ENCODE measurements at regions of chr18 and their contacts with region 1.

Region 1: DNA sequence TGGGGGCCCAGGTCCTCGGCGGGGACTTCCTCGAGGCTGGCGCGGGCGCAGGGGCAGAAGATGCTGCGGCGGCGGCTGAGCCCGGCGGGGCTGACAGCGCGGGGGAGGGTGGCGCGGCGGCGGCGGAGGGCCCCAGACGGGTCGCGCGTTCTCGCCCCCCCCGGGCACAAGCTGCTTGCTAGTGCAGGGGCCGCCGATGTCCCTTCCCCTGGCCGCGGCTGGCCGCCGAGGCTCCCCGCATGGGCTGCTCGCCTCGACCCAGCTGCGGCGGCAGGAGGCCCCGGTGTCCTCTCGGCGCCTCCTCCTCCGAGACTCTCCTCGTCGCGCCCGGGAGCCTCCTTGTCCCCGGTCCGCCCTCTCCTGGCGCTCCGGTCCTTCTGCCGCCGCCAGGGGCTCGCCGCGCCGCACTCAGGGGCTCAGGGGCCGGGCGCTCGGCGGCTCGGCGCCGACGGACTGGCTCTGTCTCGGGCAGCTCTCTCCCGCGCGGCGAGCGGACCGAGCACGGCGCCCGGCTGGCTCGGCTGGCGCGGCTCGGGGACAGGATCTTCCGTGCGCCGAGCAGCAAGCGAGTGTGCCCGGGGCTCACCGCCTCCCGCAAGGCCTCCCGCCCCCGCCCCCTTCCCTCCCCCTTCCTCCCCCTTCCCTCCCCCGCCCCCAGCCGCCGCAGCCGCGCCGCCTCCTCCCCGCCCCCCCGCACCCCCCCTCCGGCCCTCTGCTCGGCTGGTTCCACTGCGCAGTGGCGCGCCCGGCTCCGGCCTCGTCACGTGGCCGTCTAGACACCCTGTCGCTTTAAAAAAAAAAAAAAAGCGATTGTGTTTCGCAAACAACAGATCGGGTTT is 902 bp upstream of the SMAD7 start:
- DNase-seq: peak; percentile 77
- ATAC-seq: peak; percentile 46
- H3K4me3 Mint-ChIP-seq: peak overlapping the region; percentile 95
- H3K27ac Mint-ChIP-seq: peak overlapping the region; percentile 98
- H3K4me1 Mint-ChIP-seq: peaks cover 32% of the 10 kb centered on the region
- H3K27me3 Mint-ChIP-seq: no peaks in the 10 kb centered on the region
- CTCF ChIP-seq: no peak

Region 2: DNA sequence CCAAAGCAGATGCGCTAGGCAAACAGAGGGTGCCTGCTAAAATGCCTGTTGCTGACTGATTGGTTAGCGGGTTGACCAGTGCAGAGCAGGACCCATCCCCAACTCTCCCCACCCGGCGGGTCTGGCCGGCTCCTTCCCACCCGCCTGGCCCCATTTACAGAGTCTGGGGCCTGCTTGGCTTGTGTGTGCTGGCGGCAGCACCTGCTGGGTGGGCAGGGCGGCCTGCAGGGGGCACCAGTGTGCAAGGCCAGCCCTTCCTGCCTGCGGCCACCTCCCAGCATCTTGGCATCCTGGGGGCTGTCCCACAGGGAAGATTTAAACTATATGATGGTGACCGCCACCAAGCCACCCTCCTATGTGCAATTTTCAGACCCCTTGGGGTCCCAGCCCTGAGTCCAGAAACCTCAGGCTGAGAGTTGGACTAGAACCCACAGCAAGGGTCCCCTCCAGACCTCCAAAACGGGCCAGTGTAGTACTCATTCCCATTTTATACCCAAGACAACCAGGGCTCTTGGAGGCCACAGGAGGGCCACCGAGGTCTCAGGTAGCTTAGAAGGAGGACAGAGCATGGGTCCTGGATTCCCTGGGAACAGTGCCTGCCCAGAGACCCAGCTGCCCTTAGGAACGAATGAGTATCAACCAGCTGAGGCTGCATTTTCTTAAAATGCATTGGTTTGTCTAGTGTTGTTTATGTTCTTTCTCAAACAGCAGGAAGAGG is 174.5 kb before region 1 on chr18:
- CTCF ChIA-PET with region 1: interaction called, 6 read pairs
- POLR2A ChIA-PET with region 1: interaction called, 6 read pairs
- intact Hi-C with region 1: loop called (anchors 2 kb)
- DNase-seq: peak; percentile 63
- ATAC-seq: peak; percentile 85
- H3K4me3 Mint-ChIP-seq: no peak overlapping the region
- H3K27ac Mint-ChIP-seq: no peak overlapping the region
- H3K4me1 Mint-ChIP-seq: peaks cover 18% of the 10 kb centered on the region
- H3K27me3 Mint-ChIP-seq: no peaks in the 10 kb centered on the region
- CTCF ChIP-seq: peak; percentile 66

Region 3: DNA sequence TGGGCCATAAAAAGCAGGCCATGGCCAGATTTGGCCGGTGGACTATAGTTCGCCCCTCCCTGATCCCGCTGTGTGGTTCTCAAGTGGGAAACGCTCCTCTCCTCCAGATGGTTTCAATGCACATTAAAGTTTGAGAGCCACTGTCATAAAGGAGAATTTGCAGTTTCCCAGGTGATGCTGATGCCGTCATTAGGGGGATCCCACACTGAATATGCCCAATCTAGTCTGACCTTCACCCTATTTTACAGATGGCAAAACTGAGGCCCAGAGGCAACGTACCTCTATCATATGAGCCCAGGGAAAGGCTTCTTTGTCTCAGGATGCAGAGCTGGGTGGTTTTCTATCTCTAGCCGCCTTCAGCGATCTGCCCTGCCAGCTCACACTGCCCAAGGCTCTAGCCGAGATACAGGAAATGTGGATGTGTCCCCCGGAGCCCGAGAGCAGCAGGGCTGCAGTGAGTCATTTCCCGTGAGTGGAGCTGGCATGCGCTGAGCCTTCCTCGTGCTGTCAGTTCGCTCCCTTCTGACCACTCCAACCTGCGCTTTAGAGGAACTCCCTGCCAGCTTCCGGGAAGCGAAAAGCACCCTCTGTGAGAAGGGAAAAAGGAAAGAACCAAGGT is 117.1 kb before region 1 on chr18:
- CTCF ChIA-PET with region 1: no interaction called
- POLR2A ChIA-PET with region 1: interaction called, 5 read pairs
- intact Hi-C with region 1: loop called (anchors 1 kb)
- DNase-seq: peak; percentile 42
- ATAC-seq: peak; percentile 83
- H3K4me3 Mint-ChIP-seq: peak overlapping the region; percentile 76
- H3K27ac Mint-ChIP-seq: peak overlapping the region; percentile 80
- H3K4me1 Mint-ChIP-seq: peaks cover 37% of the 10 kb centered on the region
- H3K27me3 Mint-ChIP-seq: no peaks in the 10 kb centered on the region
- CTCF ChIP-seq: no peak

Region 4: GRCh38 chr18:48928787-48929186 is 22.9 kb before region 1 on chr18:
- CTCF ChIA-PET with region 1: interaction called, 3 read pairs
- POLR2A ChIA-PET with region 1: interaction called, 37 read pairs
- intact Hi-C with region 1: loop called (anchors 1 kb)
- DNase-seq: peak; percentile 65
- ATAC-seq: peak; percentile 86
- H3K4me3 Mint-ChIP-seq: peak overlapping the region; percentile 80
- H3K27ac Mint-ChIP-seq: peak overlapping the region; percentile 92
- H3K4me1 Mint-ChIP-seq: peaks cover 97% of the 10 kb centered on the region
- H3K27me3 Mint-ChIP-seq: no peaks in the 10 kb centered on the region
- CTCF ChIP-seq: no peak

Region 5: GRCh38 chr18:48992699-48993555 is 41.3 kb after region 1 on chr18:
- CTCF ChIA-PET with region 1: no interaction called
- POLR2A ChIA-PET with region 1: no interaction called
- intact Hi-C with region 1: loop called (anchors 1 kb)
- DNase-seq: peak; percentile 45
- ATAC-seq: peak; percentile 98
- H3K4me3 Mint-ChIP-seq: peak overlapping the region; percentile 42
- H3K27ac Mint-ChIP-seq: peak overlapping the region; percentile 70
- H3K4me1 Mint-ChIP-seq: peaks cover 20% of the 10 kb centered on the region
- H3K27me3 Mint-ChIP-seq: no peaks in the 10 kb centered on the region
- CTCF ChIP-seq: no peak

Region 6: GRCh38 chr18:50287441-50288347 is 1336.0 kb after region 1 on chr18 and contains the start of gene CXXC1:
- CTCF ChIA-PET with region 1: no interaction called
- POLR2A ChIA-PET with region 1: no interaction called
- intact Hi-C with region 1: loop called (anchors 5 kb)
- DNase-seq: peak; percentile 88
- ATAC-seq: peak; percentile 87
- H3K4me3 Mint-ChIP-seq: peak within 1 kb of the TSS; percentile 99
- H3K27ac Mint-ChIP-seq: peak within 1 kb of the TSS; percentile 95
- H3K4me1 Mint-ChIP-seq: peaks cover 23% of the 10 kb centered on the region
- H3K27me3 Mint-ChIP-seq: no peaks in the 10 kb centered on the region
- CTCF ChIP-seq: no peak
- total RNA-seq, gene CXXC1: 126 and 134 TPM in 2 replicates

Measured in activated B cell treated with CpG ODN at 0.5 μM for 24 hours (primary cell).